CD4-positive, alpha-beta T cell (primary cell): ENCODE measurements at regions of chr15 and their contacts with region 1.

Region 1: DNA sequence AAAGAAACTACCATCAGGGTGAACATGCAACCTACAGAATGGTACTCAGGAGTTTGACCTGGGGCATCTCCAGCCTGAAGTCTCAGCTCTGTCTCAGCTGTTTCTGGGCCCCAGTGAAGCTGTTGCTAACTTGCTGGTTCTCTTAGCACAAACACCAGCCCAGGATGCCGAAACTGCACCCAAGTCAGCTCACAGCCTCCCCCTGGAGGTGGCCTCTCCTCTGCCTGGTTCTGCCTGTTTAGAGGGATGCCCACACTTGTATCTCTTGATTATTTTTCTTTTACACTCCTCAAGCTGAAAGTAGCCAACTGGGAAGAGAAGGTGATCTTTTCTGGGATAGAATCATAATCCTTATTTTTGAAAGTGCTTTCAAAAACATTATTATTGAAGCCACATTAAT is 289.0 kb upstream of the RASGRP1 start:
- DNase-seq: peak in 13 of 14 experiments; percentile 5 to 48 (median 16)
- ATAC-seq: no peak
- H3K4me3 ChIP-seq: no peak overlapping the region
- H3K4me3 Mint-ChIP-seq: no peak overlapping the region
- H3K27ac ChIP-seq: no peak overlapping the region
- H3K27ac Mint-ChIP-seq: no peak overlapping the region
- H3K4me1 ChIP-seq: no peaks in the 10 kb centered on the region
- H3K4me1 Mint-ChIP-seq: no peaks in the 10 kb centered on the region
- H3K27me3 ChIP-seq: no peaks in the 10 kb centered on the region
- H3K27me3 Mint-ChIP-seq: peaks cover 33% of the 10 kb centered on the region
- CTCF ChIP-seq: no peak

Region 2: GRCh38 chr15:38707802-38708671 is 145.6 kb before region 1 on chr15:
- CTCF ChIA-PET with region 1: no interaction called
- POLR2A ChIA-PET with region 1: no interaction called
- intact Hi-C with region 1: loop called in 1 of 2 experiments (anchors 2 kb)
- DNase-seq: peak in 6 of 14 experiments; percentile 9 to 76 (median 54)
- ATAC-seq: peak; percentile 98
- H3K4me3 ChIP-seq: no peak overlapping the region
- H3K4me3 Mint-ChIP-seq: no peak overlapping the region
- H3K27ac ChIP-seq: no peak overlapping the region
- H3K27ac Mint-ChIP-seq: no peak overlapping the region
- H3K4me1 ChIP-seq: no peaks in the 10 kb centered on the region
- H3K4me1 Mint-ChIP-seq: no peaks in the 10 kb centered on the region
- H3K27me3 ChIP-seq: no peaks in the 10 kb centered on the region
- H3K27me3 Mint-ChIP-seq: no peaks in the 10 kb centered on the region
- CTCF ChIP-seq: peak; percentile 71

Region 3: GRCh38 chr15:38761681-38762080 is 91.9 kb before region 1 on chr15:
- CTCF ChIA-PET with region 1: no interaction called
- POLR2A ChIA-PET with region 1: no interaction called
- intact Hi-C with region 1: loop called in 1 of 2 experiments (anchors 5 kb)
- DNase-seq: no peak
- ATAC-seq: no peak
- H3K4me3 ChIP-seq: no peak overlapping the region
- H3K4me3 Mint-ChIP-seq: no peak overlapping the region
- H3K27ac ChIP-seq: no peak overlapping the region
- H3K27ac Mint-ChIP-seq: no peak overlapping the region
- H3K4me1 ChIP-seq: no peaks in the 10 kb centered on the region
- H3K4me1 Mint-ChIP-seq: no peaks in the 10 kb centered on the region
- H3K27me3 ChIP-seq: no peaks in the 10 kb centered on the region
- H3K27me3 Mint-ChIP-seq: peaks cover 20% of the 10 kb centered on the region
- CTCF ChIP-seq: no peak

Region 4: DNA sequence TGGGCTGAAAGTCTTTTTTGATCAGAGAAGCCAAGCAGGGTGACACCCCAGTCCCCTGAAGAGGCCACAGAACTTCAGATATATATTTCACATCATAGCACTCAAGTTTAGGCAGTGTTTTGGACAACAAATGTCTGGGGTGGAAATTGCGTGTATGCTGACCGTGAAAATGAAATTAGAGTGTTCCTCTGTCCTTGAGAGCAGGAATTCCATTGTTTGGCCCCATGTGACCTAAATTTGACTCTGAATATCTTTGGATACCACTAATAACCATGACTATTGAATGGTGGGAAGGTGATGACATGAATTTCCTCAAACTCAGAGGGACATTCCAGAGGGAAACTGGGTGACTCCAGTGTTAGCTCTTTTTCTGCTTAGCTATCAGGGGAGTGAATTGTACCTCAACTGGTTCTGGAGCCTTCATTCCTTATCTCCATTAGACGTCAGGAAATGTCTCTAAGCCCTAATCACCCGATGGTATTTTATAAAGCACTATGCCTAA is 25.5 kb before region 1 on chr15:
- CTCF ChIA-PET with region 1: no interaction called
- POLR2A ChIA-PET with region 1: no interaction called
- intact Hi-C with region 1: no loop called
- DNase-seq: no peak
- ATAC-seq: no peak
- H3K4me3 ChIP-seq: no peak overlapping the region
- H3K4me3 Mint-ChIP-seq: no peak overlapping the region
- H3K27ac ChIP-seq: no peak overlapping the region
- H3K27ac Mint-ChIP-seq: no peak overlapping the region
- H3K4me1 ChIP-seq: no peaks in the 10 kb centered on the region
- H3K4me1 Mint-ChIP-seq: no peaks in the 10 kb centered on the region
- H3K27me3 ChIP-seq: peaks cover 0 to 11% of the 10 kb centered on the region in 2 experiments
- H3K27me3 Mint-ChIP-seq: peaks cover 50% of the 10 kb centered on the region
- CTCF ChIP-seq: no peak

Region 5: GRCh38 chr15:38868326-38869114 is 14.9 kb after region 1 on chr15:
- CTCF ChIA-PET with region 1: no interaction called
- POLR2A ChIA-PET with region 1: no interaction called
- intact Hi-C with region 1: no loop called
- DNase-seq: no peak
- ATAC-seq: no peak
- H3K4me3 ChIP-seq: no peak overlapping the region
- H3K4me3 Mint-ChIP-seq: no peak overlapping the region
- H3K27ac ChIP-seq: no peak overlapping the region
- H3K27ac Mint-ChIP-seq: no peak overlapping the region
- H3K4me1 ChIP-seq: no peaks in the 10 kb centered on the region
- H3K4me1 Mint-ChIP-seq: no peaks in the 10 kb centered on the region
- H3K27me3 ChIP-seq: no peaks in the 10 kb centered on the region
- H3K27me3 Mint-ChIP-seq: peaks cover 31% of the 10 kb centered on the region
- CTCF ChIP-seq: no peak

Region 6: DNA sequence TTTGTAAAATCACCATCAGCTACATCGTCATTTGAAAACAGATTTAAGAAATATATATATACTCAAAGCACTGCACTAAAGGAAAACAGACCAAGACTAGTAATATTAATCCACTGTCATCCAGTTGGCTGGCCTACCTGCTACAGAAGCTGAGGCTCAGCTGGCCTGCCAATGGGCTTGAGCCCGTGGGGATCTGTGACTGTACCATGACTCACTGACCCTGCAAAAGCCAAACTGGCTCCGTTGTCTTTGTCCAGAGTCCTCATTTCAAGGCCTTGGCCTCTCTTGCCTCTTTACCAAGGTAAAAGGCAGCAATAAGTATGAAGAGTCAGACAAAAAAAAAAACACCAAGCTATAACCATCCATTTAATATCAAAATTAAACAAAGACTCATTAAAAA is 174.5 kb after region 1 on chr15:
- CTCF ChIA-PET with region 1: no interaction called
- POLR2A ChIA-PET with region 1: no interaction called
- intact Hi-C with region 1: no loop called
- DNase-seq: no peak
- ATAC-seq: no peak
- H3K4me3 ChIP-seq: no peak overlapping the region
- H3K4me3 Mint-ChIP-seq: no peak overlapping the region
- H3K27ac ChIP-seq: no peak overlapping the region
- H3K27ac Mint-ChIP-seq: no peak overlapping the region
- H3K4me1 ChIP-seq: no peaks in the 10 kb centered on the region
- H3K4me1 Mint-ChIP-seq: no peaks in the 10 kb centered on the region
- H3K27me3 ChIP-seq: no peaks in the 10 kb centered on the region
- H3K27me3 Mint-ChIP-seq: peaks cover 3% of the 10 kb centered on the region
- CTCF ChIP-seq: no peak